Posterior vena cava (tissue), 2 donors: ENCODE measurements at regions of chr14 and their contacts with region 1.

Region 1: GRCh38 chr14:26887847-26888246 is 290.0 kb upstream of the NOVA1 start:
- DNase-seq: peak; percentile 79

Region 2: GRCh38 chr14:26905225-26905624 is 17.4 kb after region 1 on chr14:
- intact Hi-C with region 1: no loop called
- DNase-seq: no peak

Region 3: DNA sequence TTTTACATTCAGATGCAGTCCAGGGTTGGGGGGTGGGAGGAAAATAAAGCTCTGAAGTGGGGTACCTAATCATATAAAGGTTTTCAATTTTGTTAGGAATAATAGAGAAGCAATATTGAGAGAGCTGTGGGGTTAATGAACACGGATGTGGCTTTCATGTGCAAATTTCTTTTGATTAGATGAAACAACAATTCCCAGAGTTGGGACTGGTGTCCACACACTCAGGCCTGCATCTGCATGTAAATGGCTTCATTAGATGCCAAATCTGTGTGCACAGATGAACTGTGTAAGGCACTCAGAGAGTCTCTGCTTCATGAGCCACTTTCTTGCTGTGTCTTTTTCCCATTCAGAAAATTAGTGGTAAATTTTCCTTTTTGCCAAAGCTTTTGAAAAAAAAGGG is 87.1 kb after region 1 on chr14:
- intact Hi-C with region 1: loop called in 1 of 2 experiments (anchors 10 kb)
- DNase-seq: no peak